ENCODE measurements at regions of chr11 and their contacts with region 1.

Region 1: GRCh38 chr11:124070915-124071635 is 29.9 kb upstream of the OR10G7 start:
- DNase-seq: peak; percentile 63
- ATAC-seq: peak; percentile 50; the same call in 1 of the 2 replicates
- H3K4me3 ChIP-seq: no peak overlapping the region
- H3K27ac ChIP-seq: no peak overlapping the region
- H3K4me1 ChIP-seq: peaks cover 0 to 5% of the 10 kb centered on the region in 2 experiments; a peak in 2 of 4 replicates
- H3K27me3 ChIP-seq: peaks cover 27% of the 10 kb centered on the region
- CTCF ChIP-seq: peak; percentile 64 to 79 (median 65); a peak in 5 of 6 replicates
- POLR2A ChIP-seq: no peak
- RAD21 ChIP-seq: peak; percentile 71

Region 2: DNA sequence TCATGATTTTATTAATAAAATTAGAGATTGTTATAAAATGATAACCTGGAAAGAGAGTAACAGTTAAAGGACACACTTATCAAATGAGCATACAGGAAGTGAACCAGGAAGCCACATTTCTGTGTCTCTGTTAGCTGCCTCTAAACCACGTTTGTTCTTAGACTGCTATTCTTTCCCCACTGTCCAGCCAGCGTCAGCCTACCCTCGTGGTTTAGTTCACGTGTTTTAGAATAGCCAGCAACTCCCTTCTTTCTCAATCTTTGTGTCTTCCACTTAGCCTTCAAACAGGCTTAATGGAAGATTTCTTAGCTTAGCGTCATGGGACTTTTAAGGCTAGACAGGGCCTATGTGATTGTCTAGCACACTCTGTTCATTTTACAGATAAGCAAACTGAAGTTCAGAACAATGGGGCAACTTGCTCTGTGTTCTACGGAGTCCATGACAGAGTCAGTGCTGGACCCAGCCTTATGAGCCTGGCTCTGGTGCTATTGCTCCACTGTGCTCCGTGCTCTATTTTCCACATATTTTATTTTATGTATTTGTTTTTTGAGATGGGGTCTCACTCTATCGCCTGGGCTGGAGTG is 613.8 kb before region 1 on chr11:
- CTCF ChIA-PET with region 1: no interaction called
- POLR2A ChIA-PET with region 1: no interaction called
- RAD21 ChIA-PET with region 1: no interaction called
- intact Hi-C with region 1: no loop called
- DNase-seq: no peak
- ATAC-seq: no peak
- H3K4me3 ChIP-seq: no peak overlapping the region
- H3K27ac ChIP-seq: no peak overlapping the region
- H3K4me1 ChIP-seq: peaks cover 22 to 58% of the 10 kb centered on the region in 2 experiments
- H3K27me3 ChIP-seq: no peaks in the 10 kb centered on the region
- CTCF ChIP-seq: no peak
- POLR2A ChIP-seq: no peak
- RAD21 ChIP-seq: no peak

Region 3: GRCh38 chr11:124108156-124108555 is 37.1 kb after region 1 on chr11:
- CTCF ChIA-PET with region 1: no interaction called
- POLR2A ChIA-PET with region 1: no interaction called
- RAD21 ChIA-PET with region 1: no interaction called
- intact Hi-C with region 1: no loop called
- DNase-seq: peak; percentile 22
- ATAC-seq: peak; percentile 74
- H3K4me3 ChIP-seq: no peak overlapping the region
- H3K27ac ChIP-seq: no peak overlapping the region
- H3K4me1 ChIP-seq: no peaks in the 10 kb centered on the region
- H3K27me3 ChIP-seq: peaks cover 29% of the 10 kb centered on the region
- CTCF ChIP-seq: peak; percentile 29 to 42 (median 42); a peak in 3 of 6 replicates
- POLR2A ChIP-seq: no peak
- RAD21 ChIP-seq: peak; percentile 53

Region 4: DNA sequence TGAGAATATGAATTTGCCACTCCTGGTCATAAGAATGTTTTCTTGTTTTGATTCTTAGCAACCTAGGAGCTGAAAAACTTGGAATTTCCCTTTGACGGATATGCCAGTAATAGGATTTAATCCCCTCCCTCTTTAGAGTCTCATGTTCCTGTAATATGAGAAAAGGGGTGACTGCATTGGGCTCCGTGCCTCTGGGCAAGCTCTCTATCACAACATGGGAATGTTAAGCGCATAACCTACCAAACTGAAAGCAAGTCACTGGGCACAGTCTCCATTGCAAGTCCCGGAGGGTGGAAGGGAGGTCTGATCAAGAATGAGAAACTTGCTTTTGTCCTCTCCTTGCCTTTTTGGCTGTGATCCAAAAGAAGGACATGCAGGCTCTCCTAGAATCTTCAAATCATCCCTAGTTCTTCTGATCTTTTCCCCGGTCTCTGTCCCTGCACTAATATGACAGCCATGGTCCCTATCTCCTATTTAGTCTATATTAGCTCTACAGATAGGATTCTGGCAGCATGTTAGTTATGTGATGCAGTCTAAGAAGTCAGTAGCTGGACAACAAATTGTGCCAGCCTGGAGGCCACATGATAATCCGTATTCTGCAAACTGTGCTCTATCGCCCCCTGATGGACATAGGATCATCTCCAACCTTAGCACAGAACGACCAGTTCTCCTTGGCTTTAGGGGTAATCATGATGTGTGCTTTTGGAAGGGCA is 123.8 kb after region 1 on chr11:
- CTCF ChIA-PET with region 1: interaction called, 26 read pairs
- POLR2A ChIA-PET with region 1: no interaction called
- RAD21 ChIA-PET with region 1: interaction called in 1 of 2 experiments, 7 read pairs
- intact Hi-C with region 1: loop called (anchors 1 kb)
- DNase-seq: peak; percentile 57
- ATAC-seq: peak; percentile 98
- H3K4me3 ChIP-seq: no peak overlapping the region
- H3K27ac ChIP-seq: no peak overlapping the region
- H3K4me1 ChIP-seq: no peaks in the 10 kb centered on the region
- H3K27me3 ChIP-seq: peaks cover 19% of the 10 kb centered on the region
- CTCF ChIP-seq: peak; percentile 71 to 90 (median 88)
- POLR2A ChIP-seq: no peak
- RAD21 ChIP-seq: peak; percentile 76

Region 5: DNA sequence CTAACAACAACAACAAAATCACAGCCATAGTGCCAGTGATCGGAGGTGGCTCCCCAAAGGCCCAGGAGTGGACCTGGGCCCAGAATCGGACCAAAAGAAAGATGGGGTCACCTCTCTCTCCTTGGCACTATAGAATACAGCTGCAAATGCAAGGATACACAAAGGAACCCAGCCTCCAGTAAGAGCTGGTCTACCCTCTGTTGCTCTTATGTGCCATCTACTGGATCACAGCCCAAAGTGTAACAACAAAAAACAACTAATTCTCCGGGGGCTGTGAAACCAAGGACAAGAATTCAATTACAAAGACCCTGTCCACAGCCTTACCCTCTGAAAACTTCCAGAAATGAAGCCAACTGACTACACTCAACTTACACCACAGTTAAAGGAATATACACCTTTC is 206.7 kb after region 1 on chr11:
- CTCF ChIA-PET with region 1: interaction called, 11 read pairs
- POLR2A ChIA-PET with region 1: no interaction called
- RAD21 ChIA-PET with region 1: no interaction called
- intact Hi-C with region 1: no loop called
- DNase-seq: no peak
- ATAC-seq: peak; percentile 50; the same call in 1 of the 2 replicates
- H3K4me3 ChIP-seq: no peak overlapping the region
- H3K27ac ChIP-seq: no peak overlapping the region
- H3K4me1 ChIP-seq: no peaks in the 10 kb centered on the region
- H3K27me3 ChIP-seq: no peaks in the 10 kb centered on the region
- CTCF ChIP-seq: peak in 2 of 3 experiments; percentile 7 to 32; a peak in 2 of 6 replicates
- POLR2A ChIP-seq: no peak
- RAD21 ChIP-seq: peak; percentile 29; the same call in 1 of the 2 replicates

Region 6: DNA sequence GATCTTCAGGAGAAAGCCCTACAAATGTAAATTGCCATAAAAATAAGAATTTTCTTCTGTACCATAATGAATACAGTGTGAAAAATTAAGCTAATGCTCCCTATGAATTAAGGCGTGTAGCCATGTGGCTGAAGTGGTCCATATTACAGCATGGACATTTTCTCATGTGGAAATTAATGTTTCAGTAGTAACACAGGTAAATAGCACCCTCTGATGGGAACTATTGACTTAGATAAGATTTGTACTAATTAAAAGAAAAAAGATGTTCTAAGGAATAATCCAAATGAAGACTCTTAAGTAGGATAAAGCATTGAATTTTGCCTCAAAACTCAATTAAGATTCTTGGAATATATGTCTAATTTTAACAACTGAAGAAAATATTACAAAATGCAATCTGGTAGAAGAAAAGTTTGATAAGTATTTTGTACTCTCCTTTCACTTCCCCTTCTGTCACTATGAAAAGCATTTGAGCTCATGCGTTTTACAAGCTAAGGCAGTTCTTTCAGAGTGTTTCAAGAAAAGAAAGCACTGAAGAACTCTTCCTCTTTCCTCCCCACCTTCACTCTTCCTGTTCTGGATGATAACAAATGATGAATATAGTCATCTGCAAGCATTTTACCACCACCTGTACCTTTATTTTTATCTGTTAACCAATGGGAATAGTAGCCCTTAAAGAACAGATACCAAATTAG is 258.9 kb after region 1 on chr11:
- CTCF ChIA-PET with region 1: interaction called, 6 read pairs
- POLR2A ChIA-PET with region 1: no interaction called
- RAD21 ChIA-PET with region 1: no interaction called
- intact Hi-C with region 1: loop called (anchors 5 kb)
- DNase-seq: no peak
- ATAC-seq: no peak
- H3K4me3 ChIP-seq: no peak overlapping the region
- H3K27ac ChIP-seq: no peak overlapping the region
- H3K4me1 ChIP-seq: no peaks in the 10 kb centered on the region
- H3K27me3 ChIP-seq: peaks cover 18% of the 10 kb centered on the region
- CTCF ChIP-seq: 0 out of 6 replicates have a peak, but pooled peaks of 2 of the 3 experiments have one; percentile 10 to 14
- POLR2A ChIP-seq: no peak
- RAD21 ChIP-seq: peak; percentile 26; the same call in 1 of the 2 replicates

Region 7: DNA sequence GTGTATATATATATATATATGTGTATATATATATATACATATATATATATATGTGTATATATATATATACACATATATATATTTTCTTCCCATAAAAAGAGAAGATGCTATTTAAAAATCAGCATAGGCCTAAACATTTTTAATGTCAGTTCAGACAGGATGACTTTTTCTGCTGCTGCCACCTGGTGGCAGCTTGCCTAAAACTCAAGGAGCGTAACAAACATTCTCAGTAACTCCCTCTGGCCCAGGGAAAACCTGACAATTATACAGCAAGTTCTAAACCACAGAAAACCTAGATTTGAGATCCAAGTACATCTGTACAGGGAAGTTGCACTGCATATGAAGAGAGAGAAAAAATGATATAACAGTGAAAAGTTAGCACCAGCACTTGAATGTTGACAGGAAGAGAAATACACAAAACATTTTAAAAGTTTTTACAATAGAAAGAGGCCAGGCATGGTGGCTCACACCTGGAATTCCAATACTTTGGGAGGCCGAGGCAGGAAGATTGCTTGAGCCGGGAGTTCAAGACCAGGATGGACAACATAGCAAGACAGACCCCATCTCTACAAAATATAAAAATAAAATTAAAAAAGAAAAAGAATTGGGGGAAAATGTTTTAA is 515.3 kb after region 1 on chr11:
- CTCF ChIA-PET with region 1: no interaction called
- POLR2A ChIA-PET with region 1: no interaction called
- RAD21 ChIA-PET with region 1: no interaction called
- intact Hi-C with region 1: loop called (anchors 5 kb)
- DNase-seq: peak; percentile 44
- ATAC-seq: peak; percentile 79
- H3K4me3 ChIP-seq: no peak overlapping the region
- H3K27ac ChIP-seq: no peak overlapping the region
- H3K4me1 ChIP-seq: no peaks in the 10 kb centered on the region
- H3K27me3 ChIP-seq: peaks cover 64% of the 10 kb centered on the region
- CTCF ChIP-seq: peak; percentile 63 to 71 (median 66)
- POLR2A ChIP-seq: no peak
- RAD21 ChIP-seq: peak; percentile 63